H1 (cell line): ENCODE measurements at regions of chr11 and their contacts with region 1.

Region 1: GRCh38 chr11:13781148-13781547 is 112.7 kb downstream of the FAR1 start:
- DNase-seq: no peak
- H3K4me3 ChIP-seq: no peak overlapping the region
- H3K27ac ChIP-seq: no peak overlapping the region
- H3K4me1 ChIP-seq: peaks cover 1 to 9% (median 5%) of the 10 kb centered on the region in 4 experiments; a peak in 5 of 7 replicates
- H3K27me3 ChIP-seq: no peaks in the 10 kb centered on the region
- CTCF ChIP-seq: no peak
- EP300 ChIP-seq: no peak
- POLR2A ChIP-seq: no peak
- RAD21 ChIP-seq: no peak

Region 2: DNA sequence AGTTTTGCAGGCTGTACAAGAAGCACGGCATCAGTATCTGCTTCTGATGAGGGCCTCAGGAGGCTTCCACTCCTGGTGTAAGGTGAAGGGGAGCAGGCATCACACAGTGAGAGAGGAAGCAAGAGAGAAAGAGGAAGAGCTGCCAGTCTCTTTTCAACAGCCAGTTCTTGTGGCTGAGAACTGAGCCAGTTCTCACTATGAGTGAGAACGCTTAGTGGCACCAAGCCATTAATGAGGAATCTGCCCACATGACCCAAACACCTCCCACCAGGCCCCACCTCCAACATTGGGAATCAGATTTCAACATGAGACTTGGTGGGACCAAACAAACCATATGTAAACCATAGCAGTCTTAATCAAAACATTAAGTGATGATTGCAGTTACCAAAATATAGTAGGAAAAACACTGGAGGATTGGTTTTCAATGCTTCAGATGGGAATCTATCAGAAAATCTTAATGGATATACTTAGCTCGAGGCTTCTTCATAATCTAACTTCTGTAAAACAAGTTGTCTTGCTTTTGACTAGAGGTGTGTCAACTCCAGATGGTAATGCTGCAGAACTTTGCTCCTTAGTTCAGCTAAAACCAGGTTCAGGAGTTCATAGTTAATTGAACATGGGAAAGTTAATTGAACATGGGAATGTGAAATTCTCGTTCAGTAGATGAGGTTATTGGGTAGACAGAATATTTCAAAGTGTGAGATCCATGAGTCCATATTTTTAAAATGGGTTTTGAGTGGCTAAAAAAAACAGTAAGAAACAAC is 100.5 kb before region 1 on chr11:
- CTCF ChIA-PET with region 1: no interaction called
- POLR2A ChIA-PET with region 1: no interaction called
- DNase-seq: no peak
- H3K4me3 ChIP-seq: no peak overlapping the region
- H3K27ac ChIP-seq: no peak overlapping the region
- H3K4me1 ChIP-seq: peaks cover 4 to 21% (median 13%) of the 10 kb centered on the region in 4 experiments
- H3K27me3 ChIP-seq: no peaks in the 10 kb centered on the region
- CTCF ChIP-seq: no peak
- EP300 ChIP-seq: no peak
- POLR2A ChIP-seq: no peak
- RAD21 ChIP-seq: no peak

Region 3: GRCh38 chr11:13717331-13717730 is 63.8 kb before region 1 on chr11:
- CTCF ChIA-PET with region 1: no interaction called
- POLR2A ChIA-PET with region 1: no interaction called
- DNase-seq: no peak
- H3K4me3 ChIP-seq: no peak overlapping the region
- H3K27ac ChIP-seq: no peak overlapping the region
- H3K4me1 ChIP-seq: no peaks in the 10 kb centered on the region
- H3K27me3 ChIP-seq: no peaks in the 10 kb centered on the region
- CTCF ChIP-seq: no peak
- EP300 ChIP-seq: no peak
- POLR2A ChIP-seq: no peak
- RAD21 ChIP-seq: no peak

Region 4: DNA sequence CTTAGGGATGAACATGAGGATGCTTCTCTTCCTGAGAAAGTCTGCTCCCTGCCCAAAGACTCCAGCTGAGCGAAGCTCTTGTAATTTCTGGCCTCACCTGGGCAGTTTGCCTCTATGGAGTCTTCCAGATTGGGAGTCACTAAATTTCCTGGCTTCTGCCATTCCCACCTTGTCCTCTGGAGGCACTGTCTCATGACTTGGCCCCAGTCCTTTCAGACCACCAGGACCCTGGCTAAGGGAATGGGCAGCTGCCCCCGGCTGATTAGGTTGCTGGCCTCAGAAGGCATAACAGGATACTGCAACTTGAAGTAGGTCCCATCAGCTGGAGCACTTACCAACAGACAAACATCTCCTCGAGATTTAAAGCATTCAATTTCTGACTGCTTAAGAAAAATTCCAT is 53.3 kb after region 1 on chr11:
- CTCF ChIA-PET with region 1: interaction called, 12 read pairs
- POLR2A ChIA-PET with region 1: no interaction called
- DNase-seq: peak; percentile 9 to 74
- H3K4me3 ChIP-seq: no peak overlapping the region
- H3K27ac ChIP-seq: no peak overlapping the region
- H3K4me1 ChIP-seq: no peaks in the 10 kb centered on the region
- H3K27me3 ChIP-seq: no peaks in the 10 kb centered on the region
- CTCF ChIP-seq: peak; percentile 66 to 80 (median 69)
- EP300 ChIP-seq: no peak
- POLR2A ChIP-seq: no peak
- RAD21 ChIP-seq: peak; percentile 41 to 61